Right ventricle myocardium inferior (tissue), 1 donor: ENCODE measurements at regions of chr17 and their contacts with region 1.

Region 1: GRCh38 chr17:69909389-69909788 is 165.6 kb upstream of the KCNJ16 start:
- DNase-seq: no peak
- ATAC-seq: no peak

Region 2: GRCh38 chr17:69733171-69734012 is 176.0 kb before region 1 on chr17:
- intact Hi-C with region 1: loop called (anchors 10 kb)
- DNase-seq: peak; percentile 50
- ATAC-seq: peak; percentile 88

Region 3: DNA sequence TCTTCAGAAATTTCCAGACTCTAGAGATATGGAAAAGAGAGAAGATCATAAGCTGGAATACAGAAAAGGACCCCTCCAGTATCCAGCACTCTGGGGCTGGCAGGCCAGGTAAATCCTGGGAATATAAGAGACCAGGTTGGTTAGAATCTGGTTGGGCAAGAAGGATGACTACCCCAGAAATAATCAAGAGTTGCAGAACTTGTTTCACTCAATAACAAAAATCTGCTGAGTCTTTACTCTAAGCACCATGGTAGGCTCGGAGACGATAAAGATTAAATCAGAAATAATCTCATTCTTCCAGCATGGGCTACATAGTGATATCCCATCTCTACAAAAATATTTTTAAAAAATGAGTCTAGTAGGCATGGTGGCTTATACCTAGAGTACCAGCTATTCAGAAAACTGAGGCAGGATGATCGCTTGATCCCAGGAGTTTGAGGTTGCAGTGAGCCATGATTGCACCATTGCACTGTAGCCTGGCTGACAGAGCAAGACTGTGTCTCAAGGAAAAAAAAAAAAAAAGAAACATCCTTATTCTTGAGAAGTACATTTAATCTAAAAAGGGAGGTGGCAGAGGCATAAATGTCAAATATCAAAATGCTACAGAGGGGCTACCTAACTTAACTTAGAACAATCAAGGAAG is 27.7 kb after region 1 on chr17:
- intact Hi-C with region 1: no loop called
- DNase-seq: no peak
- ATAC-seq: no peak

Region 4: GRCh38 chr17:69967910-69968411 is 58.6 kb after region 1 on chr17:
- intact Hi-C with region 1: no loop called
- DNase-seq: no peak
- ATAC-seq: no peak